Activated B cell treated with CpG ODN at 0.5 μM for 24 hours (primary cell): ENCODE measurements at regions of chr1 and their contacts with region 1.

Region 1: GRCh38 chr1:44049839-44050238 is 18.6 kb upstream of the SLC6A9 start:
- DNase-seq: no peak
- ATAC-seq: no peak
- H3K4me3 Mint-ChIP-seq: no peak overlapping the region
- H3K27ac Mint-ChIP-seq: no peak overlapping the region
- H3K4me1 Mint-ChIP-seq: peaks cover 2% of the 10 kb centered on the region
- H3K27me3 Mint-ChIP-seq: peaks cover 13% of the 10 kb centered on the region
- CTCF ChIP-seq: no peak

Region 2: GRCh38 chr1:43763497-43763973 is 286.3 kb before region 1 on chr1:
- CTCF ChIA-PET with region 1: interaction called, 31 read pairs
- POLR2A ChIA-PET with region 1: no interaction called
- intact Hi-C with region 1: loop called (anchors 1 kb)
- DNase-seq: peak; percentile 18
- ATAC-seq: peak; percentile 70
- H3K4me3 Mint-ChIP-seq: no peak overlapping the region
- H3K27ac Mint-ChIP-seq: no peak overlapping the region
- H3K4me1 Mint-ChIP-seq: peaks cover 3% of the 10 kb centered on the region
- H3K27me3 Mint-ChIP-seq: no peaks in the 10 kb centered on the region
- CTCF ChIP-seq: peak; percentile 36

Region 3: DNA sequence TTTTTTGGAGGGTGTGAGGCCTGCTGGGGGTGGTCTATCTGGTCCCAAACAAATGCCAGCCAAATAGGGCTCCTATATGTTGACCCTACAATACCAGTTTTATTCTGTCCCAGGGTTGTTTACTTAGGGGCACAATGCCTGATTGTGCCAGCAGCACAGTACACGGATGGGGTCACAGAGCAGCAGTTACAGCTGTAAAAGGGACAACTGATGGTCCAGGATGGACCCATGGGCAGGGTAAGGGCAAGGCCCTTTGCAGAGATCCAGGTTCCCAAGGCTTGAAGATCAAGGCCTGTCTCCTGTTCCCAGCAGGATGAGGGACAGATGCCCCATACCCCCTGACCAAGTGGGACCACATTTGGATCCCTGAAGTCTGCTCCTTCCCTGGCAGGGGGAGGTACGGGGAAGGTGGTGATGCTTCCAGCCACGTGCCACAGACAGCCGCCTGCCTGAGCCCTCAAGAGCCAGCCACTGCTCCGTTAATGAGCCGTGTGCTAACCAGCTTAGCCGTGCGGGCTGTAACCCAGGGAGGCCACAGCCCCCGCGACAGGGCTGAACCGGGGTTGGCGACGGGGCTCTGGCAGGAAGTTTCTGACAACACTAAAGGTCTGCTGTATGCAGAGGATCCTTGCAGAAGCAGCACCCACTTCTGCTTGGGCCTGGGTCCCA is 36.8 kb before region 1 on chr1:
- CTCF ChIA-PET with region 1: interaction called, 10 read pairs
- POLR2A ChIA-PET with region 1: no interaction called
- intact Hi-C with region 1: no loop called
- DNase-seq: no peak
- ATAC-seq: no peak
- H3K4me3 Mint-ChIP-seq: no peak overlapping the region
- H3K27ac Mint-ChIP-seq: no peak overlapping the region
- H3K4me1 Mint-ChIP-seq: no peaks in the 10 kb centered on the region
- H3K27me3 Mint-ChIP-seq: peaks cover 6% of the 10 kb centered on the region
- CTCF ChIP-seq: no peak

Region 4: DNA sequence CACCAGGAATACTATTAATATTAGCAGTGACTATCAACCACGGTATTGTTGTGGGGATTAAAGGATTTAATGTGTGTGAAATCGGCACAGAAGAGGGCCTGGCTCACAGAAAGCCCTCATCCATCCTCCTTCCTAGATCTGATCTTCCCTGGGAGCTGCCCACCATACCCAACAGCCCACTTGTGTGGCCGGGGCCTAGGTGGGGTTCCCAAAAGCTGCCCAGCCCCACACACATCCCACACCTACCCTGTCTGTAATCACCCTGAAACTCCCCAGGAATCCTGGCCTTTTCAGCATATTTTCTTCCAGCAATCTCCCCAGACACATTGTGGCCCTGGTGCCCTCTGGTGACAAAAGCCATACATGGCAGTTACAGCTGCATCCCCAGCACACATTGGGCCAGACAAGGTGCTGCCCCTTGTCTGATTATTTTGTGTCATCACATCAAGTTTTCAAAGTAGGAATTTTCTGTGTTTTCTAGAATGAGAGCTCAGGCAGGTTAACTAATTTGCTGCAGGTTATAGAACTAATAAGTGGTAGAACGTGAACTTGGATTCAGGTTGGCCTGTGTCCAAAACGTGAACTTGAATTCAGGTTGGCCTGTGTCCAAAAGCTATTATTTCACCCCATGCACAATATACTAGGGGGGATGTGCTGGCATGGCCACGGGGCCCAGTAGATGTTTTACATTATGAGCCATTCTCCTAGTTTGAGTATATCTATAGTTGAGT is 13.3 kb before region 1 on chr1:
- CTCF ChIA-PET with region 1: interaction called, 18 read pairs
- POLR2A ChIA-PET with region 1: no interaction called
- intact Hi-C with region 1: no loop called
- DNase-seq: peak; percentile 50
- ATAC-seq: peak; percentile 92
- H3K4me3 Mint-ChIP-seq: no peak overlapping the region
- H3K27ac Mint-ChIP-seq: no peak overlapping the region
- H3K4me1 Mint-ChIP-seq: peaks cover 6% of the 10 kb centered on the region
- H3K27me3 Mint-ChIP-seq: no peaks in the 10 kb centered on the region
- CTCF ChIP-seq: no peak